ENCODE measurements at regions of chr22 and their contacts with region 1.

Region 1: DNA sequence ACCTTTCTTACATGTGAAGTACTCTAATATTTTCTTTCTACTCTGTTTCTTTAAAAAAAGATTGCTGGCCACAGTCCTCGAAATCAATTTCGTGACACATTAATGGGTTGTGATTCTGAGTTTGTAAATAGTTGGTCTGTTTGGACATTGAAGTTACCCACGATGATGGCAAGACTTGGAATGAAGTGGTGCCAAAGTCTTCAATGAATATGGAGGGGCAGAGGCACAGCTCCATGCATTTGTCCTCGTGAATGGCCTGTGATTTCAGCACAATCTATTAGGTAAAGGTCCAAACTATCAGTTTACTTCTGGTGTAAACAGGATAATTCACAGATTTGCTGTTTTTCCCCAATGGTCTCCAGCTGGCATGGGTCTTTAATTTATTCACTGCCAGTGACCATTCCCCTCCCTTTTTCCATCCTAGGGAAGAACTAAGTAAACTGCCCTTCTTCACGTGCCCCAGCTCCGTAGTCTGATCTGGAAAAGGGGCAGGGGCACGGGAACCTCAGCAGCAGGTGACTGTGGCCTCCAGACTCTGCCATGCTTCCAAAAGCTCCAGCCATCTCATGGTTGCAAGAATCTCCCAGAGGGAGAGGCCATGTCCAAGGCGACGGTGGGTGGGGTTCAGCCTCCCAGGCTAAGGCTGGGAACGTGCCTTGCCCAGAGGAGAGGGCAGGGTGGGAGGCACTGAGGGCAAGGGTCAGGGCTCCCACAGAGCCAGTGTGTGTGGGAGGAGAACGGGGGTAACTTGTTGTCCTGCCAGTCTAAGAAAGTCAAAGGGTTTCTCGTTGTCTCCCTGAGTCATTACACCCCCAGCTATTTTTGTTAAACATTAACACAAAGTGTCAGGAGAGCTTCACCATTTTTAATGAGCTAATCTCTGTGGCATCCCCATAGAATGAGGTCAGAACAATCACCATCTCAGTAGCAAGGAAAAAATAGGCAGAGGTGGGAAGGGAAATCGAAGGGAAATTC is 16.9 kb upstream of the PEX26 start:
- DNase-seq: peak; percentile 46

Region 2: GRCh38 chr22:17258015-17258787 is 802.7 kb before region 1 on chr22:
- intact Hi-C with region 1: no loop called
- DNase-seq: no peak

Region 3: DNA sequence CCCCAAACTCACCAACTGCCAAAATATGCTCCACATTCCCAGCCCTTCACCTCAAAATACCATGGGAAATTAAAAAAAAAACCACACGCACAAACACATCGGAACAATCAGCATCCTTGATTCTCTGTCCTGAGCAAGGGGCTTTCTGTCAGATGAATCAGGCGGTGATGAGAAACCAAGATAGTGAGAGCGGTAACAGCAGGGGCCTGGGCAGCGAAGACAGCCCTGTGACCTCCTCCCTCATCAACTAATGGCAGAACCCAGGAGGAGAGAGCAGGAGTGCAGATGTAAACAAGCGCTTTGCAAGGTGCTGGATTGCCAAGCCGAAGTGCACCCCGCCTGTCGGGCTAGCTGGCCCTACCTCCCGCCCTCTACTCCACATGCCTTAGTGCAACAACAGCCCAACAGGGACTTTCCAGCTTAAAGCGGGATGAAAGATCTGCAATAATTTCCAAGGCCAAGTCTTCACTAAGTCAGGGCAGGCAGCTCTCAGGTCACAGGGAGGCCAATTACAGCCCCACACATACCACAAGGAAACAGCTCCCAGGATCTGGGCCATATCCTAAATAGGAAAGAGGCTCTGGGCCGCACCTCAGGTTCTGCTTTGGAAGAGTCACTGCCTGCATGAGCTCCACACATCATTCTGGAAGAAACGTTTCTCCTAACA is 214.5 kb before region 1 on chr22:
- intact Hi-C with region 1: no loop called
- DNase-seq: no peak

Region 4: GRCh38 chr22:18012531-18012930 is 48.4 kb before region 1 on chr22:
- intact Hi-C with region 1: loop called in 1 of 2 experiments (anchors 10 kb)
- DNase-seq: no peak

Measured in posterior vena cava (tissue), 2 donors.